ENCODE measurements at regions of chr7 and their contacts with region 1.

Region 1: DNA sequence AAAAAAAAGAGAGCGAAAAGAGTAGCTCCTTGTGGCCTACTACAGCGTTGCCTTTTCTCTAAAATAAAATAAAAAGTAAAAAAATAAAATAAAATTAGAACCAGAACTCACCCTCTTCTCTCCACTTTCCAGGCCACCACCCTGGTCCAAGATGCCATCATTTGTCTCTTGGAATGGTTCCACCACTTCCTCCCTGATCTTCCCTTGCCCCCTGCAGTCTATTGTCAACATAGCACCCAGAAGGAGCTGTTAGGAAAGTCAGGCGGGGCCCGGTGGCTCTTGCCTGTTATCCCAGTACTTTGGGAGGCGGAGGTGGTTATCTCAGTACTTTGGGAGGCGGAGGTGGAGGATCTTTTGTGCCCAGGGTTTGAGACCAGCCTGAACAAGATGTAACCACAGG is 7.6 kb upstream of the GRID2IP start:
- DNase-seq: peak; percentile 84
- H3K4me3 ChIP-seq: no peak overlapping the region
- H3K27ac ChIP-seq: no peak overlapping the region
- H3K4me1 ChIP-seq: no peaks in the 10 kb centered on the region
- H3K27me3 ChIP-seq: no peaks in the 10 kb centered on the region
- CTCF ChIP-seq: peak; percentile 58

Region 2: GRCh38 chr7:6482743-6483119 is 76.1 kb before region 1 on chr7:
- CTCF ChIA-PET with region 1: no interaction called
- POLR2A ChIA-PET with region 1: no interaction called
- intact Hi-C with region 1: no loop called
- DNase-seq: no peak
- H3K4me3 ChIP-seq: peak overlapping the region; percentile 97
- H3K27ac ChIP-seq: peak overlapping the region; percentile 94
- H3K4me1 ChIP-seq: peaks cover 17% of the 10 kb centered on the region
- H3K27me3 ChIP-seq: no peaks in the 10 kb centered on the region
- CTCF ChIP-seq: no peak

Region 3: GRCh38 chr7:6658618-6659341 is 99.9 kb after region 1 on chr7:
- CTCF ChIA-PET with region 1: interaction called, 4 read pairs
- POLR2A ChIA-PET with region 1: interaction called, 10 read pairs
- intact Hi-C with region 1: no loop called
- DNase-seq: no peak
- H3K4me3 ChIP-seq: no peak overlapping the region
- H3K27ac ChIP-seq: no peak overlapping the region
- H3K4me1 ChIP-seq: peaks cover 7% of the 10 kb centered on the region
- H3K27me3 ChIP-seq: no peaks in the 10 kb centered on the region
- CTCF ChIP-seq: no peak

Region 4: GRCh38 chr7:6917258-6917657 is 358.4 kb after region 1 on chr7:
- CTCF ChIA-PET with region 1: no interaction called
- POLR2A ChIA-PET with region 1: no interaction called
- intact Hi-C with region 1: no loop called
- DNase-seq: no peak
- H3K4me3 ChIP-seq: no peak overlapping the region
- H3K27ac ChIP-seq: no peak overlapping the region
- H3K4me1 ChIP-seq: no peaks in the 10 kb centered on the region
- H3K27me3 ChIP-seq: no peaks in the 10 kb centered on the region
- CTCF ChIP-seq: no peak

Measured in A673 (cell line).